ENCODE measurements at regions of chr7 and their contacts with region 1.

Region 1: DNA sequence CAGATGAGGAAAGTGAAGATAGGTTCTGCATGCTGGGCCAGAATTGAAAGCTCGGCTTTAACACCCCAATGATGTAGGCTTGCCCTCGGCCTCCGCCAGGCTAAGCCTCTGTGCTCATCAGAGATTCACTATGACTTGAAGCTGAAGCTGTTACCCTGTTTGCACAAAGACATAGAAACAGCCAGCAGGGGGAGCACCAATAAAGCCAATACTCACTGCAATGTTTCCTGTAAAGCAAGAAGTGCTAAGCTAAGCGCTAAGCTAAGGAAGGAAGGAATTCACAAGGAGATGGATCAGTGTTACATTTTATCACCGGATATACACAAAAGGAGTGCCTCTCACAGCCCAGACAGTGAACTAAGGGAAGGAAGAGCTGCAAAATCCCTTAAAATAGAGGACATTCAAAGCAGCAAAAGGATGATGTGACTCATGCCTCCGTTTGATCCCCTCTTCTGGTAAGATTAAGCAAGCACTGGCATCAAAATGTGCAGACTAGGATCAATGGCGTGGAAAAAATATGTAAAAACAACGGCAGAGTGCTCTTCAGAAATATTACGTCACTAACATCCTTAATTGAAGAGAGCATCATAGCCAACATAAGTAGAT is 153.8 kb downstream of the COBL start:
- DNase-seq: no peak
- H3K4me3 ChIP-seq: no peak overlapping the region
- H3K27ac ChIP-seq: no peak overlapping the region
- H3K4me1 ChIP-seq: peaks cover 0 to 12% (median 4%) of the 10 kb centered on the region in 6 donors
- H3K27me3 ChIP-seq: peaks cover 0 to 26% (median 0%) of the 10 kb centered on the region in 7 donors
- CTCF ChIP-seq: peak; percentile 24 to 84 (median 72)
- POLR2A ChIP-seq: no peak

Region 2: DNA sequence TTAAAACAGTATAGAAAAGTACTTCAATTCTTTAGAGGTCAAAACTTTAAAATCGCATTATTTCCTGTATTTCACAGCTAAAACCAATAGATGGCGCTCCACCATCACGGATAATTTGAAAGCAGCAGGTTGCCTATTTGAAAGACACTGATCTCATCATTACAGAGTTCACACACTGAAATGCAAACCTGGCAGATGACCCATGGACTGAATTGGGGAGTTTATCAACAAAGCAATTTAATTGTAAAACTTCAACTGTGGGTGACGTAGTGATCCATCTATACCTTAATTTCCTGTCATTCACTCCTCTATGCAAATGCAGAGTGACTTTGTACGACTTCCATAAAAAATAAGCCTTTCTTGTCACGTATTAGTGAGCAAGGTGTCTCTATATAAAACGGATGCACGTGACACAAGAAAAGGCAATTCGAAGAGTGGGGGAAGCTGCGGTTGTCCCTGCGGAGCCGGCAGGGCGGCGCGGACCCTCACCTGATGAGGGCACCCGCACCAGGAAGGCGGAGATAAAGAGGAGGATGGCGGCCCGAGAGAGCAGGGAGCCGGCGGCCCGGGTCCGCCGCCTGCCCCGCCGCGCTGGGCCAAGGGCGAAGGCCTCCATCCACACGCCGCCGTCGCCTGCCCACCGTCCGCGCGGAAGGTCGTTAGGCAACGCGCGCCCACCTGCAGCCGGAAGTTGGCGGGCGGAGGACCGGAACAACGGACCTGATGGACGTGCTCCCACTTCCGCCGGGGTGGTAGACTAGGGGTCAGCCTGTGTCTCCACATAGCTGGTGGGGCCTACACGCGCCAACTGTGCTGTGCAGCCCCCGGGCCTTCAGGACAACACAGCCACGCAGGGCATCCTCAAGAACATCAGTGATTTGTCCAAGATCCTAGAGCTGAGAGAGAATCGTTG is 1070.0 kb before region 1 on chr7 and contains the start of gene ZPBP:
- intact Hi-C with region 1: loop called (anchors 5 kb)
- DNase-seq: peak; percentile 88
- H3K4me3 ChIP-seq: peak within 1 kb of the TSS; percentile 33 to 72 (median 44)
- H3K27ac ChIP-seq: peak within 1 kb of the TSS in 5 of 8 donors; percentile 40 to 68 (median 48)
- H3K4me1 ChIP-seq: peaks cover 0 to 13% (median 9%) of the 10 kb centered on the region in 6 donors
- H3K27me3 ChIP-seq: no peaks in the 10 kb centered on the region
- CTCF ChIP-seq: peak; percentile 45 to 81 (median 72)
- POLR2A ChIP-seq: no peak
- total RNA-seq, gene ZPBP: not detected

Region 3: GRCh38 chr7:50142425-50143017 is 1020.3 kb before region 1 on chr7:
- intact Hi-C with region 1: loop called (anchors 5 kb)
- DNase-seq: no peak
- H3K4me3 ChIP-seq: peak overlapping the region in 1 of 8 donors; percentile 32
- H3K27ac ChIP-seq: peak overlapping the region in 3 of 8 donors; percentile 8 to 41 (median 27)
- H3K4me1 ChIP-seq: peaks cover 0 to 33% (median 15%) of the 10 kb centered on the region in 6 donors
- H3K27me3 ChIP-seq: no peaks in the 10 kb centered on the region
- CTCF ChIP-seq: peak; percentile 45 to 74 (median 65)
- POLR2A ChIP-seq: no peak

Region 4: GRCh38 chr7:51090411-51090810 is 72.4 kb before region 1 on chr7:
- intact Hi-C with region 1: no loop called
- DNase-seq: no peak
- H3K4me3 ChIP-seq: no peak overlapping the region
- H3K27ac ChIP-seq: no peak overlapping the region
- H3K4me1 ChIP-seq: no peaks in the 10 kb centered on the region
- H3K27me3 ChIP-seq: no peaks in the 10 kb centered on the region
- CTCF ChIP-seq: no peak
- POLR2A ChIP-seq: no peak

Region 5: DNA sequence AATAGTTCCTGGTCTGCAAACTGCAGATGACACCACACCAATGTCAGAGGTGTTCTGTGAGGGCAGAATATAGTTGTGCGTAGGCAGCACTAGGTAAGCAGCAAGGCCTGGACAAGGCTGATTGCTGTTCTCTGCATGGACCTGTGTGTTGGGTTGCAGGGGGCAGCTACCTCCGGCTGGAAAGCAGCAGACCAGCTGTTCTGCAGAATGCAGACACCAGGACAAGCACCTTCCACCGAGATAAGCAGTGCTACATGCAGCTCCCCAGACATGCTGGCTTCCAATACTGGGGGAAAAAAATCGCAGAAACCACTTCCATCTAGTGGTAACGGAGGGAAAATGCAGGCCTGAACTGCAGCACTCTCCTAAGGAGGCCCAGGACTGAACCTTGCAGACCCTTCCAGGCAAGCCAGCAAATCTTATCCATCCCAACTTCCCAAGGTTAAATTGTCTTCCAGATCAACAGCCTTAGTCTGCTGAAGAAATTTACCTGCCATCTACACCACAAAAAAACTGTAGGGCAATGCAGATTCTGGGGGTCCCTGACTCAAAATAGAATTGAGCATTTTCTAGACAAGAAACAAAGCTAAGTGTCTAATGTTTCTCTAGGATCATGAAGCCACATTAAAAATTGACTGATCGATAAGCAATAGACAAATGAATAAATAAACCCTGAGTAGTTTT is 204.2 kb after region 1 on chr7:
- intact Hi-C with region 1: loop called (anchors 5 kb)
- DNase-seq: no peak
- H3K4me3 ChIP-seq: no peak overlapping the region
- H3K27ac ChIP-seq: no peak overlapping the region
- H3K4me1 ChIP-seq: no peaks in the 10 kb centered on the region
- H3K27me3 ChIP-seq: peaks cover 0 to 16% (median 0%) of the 10 kb centered on the region in 7 donors
- CTCF ChIP-seq: peak in 10 of 11 experiments; percentile 30 to 62 (median 51)
- POLR2A ChIP-seq: no peak

Region 6: DNA sequence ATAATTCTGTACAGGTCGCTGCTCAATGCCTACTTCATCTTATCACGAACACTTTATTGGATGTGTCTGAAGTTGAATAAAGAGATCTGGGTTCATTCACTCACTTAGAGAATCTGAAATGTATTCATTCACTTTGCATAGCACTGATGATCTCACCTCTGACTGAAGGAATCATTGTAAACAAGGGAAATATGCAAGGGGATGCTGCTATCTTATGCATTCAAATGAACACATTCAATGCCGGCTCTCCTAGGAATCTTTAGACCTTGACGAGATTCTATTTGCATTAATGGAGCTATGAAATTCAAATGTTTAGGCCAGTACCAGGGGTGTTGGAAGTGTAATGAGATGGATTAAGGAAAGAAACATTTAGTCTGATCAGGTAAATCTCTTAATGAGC is 354.4 kb after region 1 on chr7:
- intact Hi-C with region 1: no loop called
- DNase-seq: no peak
- H3K4me3 ChIP-seq: no peak overlapping the region
- H3K27ac ChIP-seq: no peak overlapping the region
- H3K4me1 ChIP-seq: no peaks in the 10 kb centered on the region
- H3K27me3 ChIP-seq: no peaks in the 10 kb centered on the region
- CTCF ChIP-seq: no peak
- POLR2A ChIP-seq: no peak